ENCODE measurements at regions of chr3 and their contacts with region 1.

Region 1: DNA sequence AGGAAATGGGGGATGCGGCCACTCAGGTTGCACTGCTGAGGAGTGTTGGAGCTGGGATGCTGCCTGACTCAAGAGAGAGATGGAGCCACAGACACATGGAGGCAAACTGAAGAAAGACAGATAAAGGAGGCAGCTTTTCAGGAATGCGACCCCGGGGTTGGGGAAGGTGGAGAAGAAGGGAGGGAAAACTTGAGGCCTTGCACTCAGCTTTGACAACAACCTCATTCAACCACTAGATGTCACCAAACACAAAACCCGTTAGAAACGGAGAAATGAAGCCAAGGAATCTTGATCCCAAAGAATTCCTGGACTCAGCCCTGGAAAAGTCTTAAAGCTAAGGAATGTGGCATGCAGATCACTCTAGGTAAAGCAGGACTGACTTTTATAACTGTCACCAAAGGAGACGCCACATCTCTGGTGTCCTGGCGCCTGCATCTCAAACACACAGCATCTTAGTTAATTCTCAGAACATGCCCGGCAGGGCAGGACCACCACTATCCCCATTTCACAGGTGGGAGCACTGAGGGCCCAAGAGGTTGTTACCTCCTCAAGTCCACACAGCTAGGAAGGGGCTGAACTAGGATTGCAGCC is 59.6 kb upstream of the LMCD1 start:
- DNase-seq: peak in 18 of 42 donors; percentile 14 to 70 (median 33)

Region 2: GRCh38 chr3:8458711-8459110 is 16.6 kb after region 1 on chr3:
- intact Hi-C with region 1: no loop called
- DNase-seq: no peak

Region 3: DNA sequence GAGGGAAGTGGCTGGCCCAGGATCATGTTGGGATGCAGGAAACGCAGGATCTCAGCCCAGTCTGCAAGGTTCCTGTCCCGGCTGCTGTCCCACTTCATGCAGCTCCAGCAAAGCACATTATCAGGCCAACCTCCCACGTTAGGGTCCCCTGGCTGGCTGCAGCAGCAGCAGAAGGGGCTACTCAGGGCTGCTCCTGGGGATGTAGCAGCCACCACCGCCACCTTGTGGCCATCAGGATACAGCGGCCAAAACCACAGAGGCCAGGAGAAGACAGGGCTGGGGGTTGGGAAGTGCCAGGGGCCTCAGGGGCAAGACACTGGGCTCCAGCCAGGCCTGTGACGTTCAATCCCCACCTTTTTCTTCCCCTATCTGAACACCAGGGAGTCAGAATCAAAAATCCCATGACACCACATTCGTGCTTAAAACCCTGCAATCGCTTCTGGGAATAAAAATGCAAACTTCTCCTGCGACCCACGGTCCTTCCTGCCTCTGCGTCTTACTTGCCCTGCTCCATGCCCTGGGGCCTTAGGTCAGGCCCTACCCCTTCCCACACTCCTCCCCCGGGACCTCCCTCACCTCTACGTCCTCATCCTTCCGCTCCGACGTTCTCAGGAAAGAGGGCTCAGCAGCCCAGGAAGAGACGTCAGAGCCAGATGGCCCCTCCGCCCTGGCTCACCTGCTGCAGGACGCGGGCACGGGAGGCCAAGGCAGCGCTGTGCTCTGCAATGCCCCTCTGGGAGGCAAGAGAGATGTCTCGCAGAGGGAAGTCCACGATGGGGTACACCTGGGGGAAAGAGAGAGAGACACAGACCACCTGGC is 181.0 kb after region 1 on chr3:
- intact Hi-C with region 1: loop called (anchors 2 kb)
- DNase-seq: peak; percentile 53 to 88 (median 73)

Region 4: DNA sequence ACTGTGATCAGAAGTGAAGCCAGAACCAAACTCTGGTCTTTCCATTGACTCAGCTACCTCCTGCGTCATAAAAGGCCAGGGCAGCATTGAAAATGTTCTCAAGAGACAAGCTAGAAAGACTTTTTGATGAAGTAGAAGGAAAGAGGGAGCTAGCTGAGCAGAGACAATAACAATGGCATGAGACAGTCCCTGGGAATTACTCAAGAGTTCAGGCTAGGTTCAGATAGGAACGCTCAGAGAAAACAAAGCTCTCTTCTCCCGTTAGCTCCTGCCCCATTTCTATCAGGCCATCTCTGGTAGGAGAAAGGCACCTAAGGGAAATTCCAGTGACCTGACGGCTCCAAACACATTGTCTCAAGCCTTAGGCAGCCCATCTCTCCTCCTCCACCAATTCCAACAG is 334.3 kb after region 1 on chr3:
- intact Hi-C with region 1: no loop called
- DNase-seq: peak in 1 of 42 donors; percentile 27